Aorta (tissue), 5 donors: ENCODE measurements at regions of chr11 and their contacts with region 1.

Region 1: DNA sequence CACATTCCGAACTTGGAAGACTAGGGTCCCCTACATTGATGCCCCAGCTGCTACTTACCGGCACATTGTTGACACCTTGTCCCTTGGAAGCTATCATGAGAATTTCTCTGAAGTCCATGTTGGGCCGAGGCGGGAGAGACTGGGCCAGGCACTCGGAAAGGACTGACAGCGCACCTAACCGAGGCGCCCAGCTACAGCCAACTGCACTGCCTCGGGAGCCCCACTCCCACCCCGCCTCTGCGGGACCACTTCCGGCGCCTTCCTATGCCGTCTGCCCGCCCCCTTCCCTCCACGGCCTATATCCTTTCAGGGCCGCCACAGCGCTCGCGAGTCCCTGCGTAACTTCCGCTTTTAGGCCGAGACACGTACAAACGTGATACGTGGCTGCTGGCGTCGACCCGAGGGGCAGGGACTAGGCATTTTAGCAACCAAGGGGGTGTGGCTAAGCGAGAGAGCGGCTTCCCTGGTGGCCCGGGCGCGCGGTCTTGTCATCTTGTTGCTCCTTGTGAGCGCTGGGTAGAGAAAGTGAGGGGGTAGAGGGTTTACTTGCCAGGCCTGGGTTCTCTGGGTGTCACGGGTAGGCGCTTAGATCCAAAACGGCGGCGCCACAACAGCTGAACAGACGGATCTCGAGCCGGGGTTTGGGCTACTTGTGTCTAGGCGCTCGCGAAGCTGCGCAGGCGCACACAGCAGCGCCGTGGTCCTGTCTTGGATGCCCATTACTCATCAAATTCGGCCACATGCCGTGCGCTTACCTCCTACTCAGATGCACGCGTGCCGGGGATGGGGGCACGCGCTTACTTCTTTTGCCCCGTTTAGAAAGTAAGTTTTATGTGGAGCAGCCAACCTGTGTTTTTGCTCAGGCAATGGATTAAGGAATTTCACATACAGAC is at the start of gene SPTY2D1:
- DNase-seq: peak; percentile 100
- ATAC-seq: peak; percentile 100
- H3K4me3 ChIP-seq: peak within 1 kb of the TSS; percentile 75 to 84
- H3K27ac ChIP-seq: peak within 1 kb of the TSS; percentile 3 to 72
- H3K4me1 ChIP-seq: peaks cover 0 to 3% of the 10 kb centered on the region in 2 donors
- H3K27me3 ChIP-seq: no peaks in the 10 kb centered on the region
- total RNA-seq, gene SPTY2D1: 16.9 to 19.9 TPM

Region 2: DNA sequence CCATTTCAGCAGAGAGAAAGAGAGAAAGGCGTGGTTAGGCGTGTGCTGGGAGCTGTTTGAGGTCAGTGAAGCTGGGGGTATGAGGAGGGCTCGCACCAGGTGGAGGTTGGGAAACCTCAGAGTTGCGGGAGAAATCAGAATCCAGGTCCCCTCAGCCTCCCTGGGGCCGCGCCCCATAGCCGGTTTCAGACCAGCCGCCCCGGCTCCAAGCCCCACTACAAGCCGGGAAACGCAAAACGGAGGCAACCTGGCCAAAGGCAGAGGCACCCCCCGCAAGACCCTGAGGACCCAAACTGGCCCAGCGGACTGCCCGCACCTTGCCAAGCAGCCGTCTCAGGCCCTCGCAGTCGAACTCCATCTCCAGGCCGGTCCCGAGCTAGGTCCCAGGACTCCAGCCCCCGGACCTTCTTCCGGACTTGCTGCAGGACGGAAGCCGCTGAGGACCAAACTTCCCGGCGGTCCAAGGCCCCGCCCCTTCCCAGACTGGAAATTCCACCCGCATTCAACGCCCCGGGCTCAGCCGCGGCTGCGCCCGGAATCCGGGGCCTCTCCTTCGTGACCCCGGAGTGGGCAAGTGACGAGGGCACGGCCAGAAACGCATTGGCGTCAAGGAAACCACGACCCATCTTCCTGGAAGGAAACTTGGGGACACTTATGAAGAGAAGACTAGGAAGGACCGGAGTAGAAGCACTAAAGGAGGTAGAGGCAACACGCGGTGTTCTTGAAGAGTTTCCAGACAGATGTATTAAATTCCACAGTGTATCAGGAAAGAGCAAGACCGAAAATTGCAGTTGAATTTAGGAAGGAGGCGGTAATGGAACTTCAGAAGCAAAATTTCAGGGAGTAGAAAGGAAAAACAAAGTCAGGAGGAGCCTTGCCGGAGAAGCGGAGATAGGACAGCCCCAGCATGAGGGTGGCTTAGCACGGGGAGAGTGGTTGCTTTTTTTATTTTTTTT is 45.8 kb before region 1 on chr11 and contains the start of gene UEVLD:
- intact Hi-C with region 1: loop called in 1 of 2 experiments (anchors 5 kb)
- DNase-seq: peak; percentile 92 to 96
- ATAC-seq: peak; percentile 98
- H3K4me3 ChIP-seq: peak within 1 kb of the TSS; percentile 70 to 96
- H3K27ac ChIP-seq: peak within 1 kb of the TSS in 1 of 2 donors; percentile 72
- H3K4me1 ChIP-seq: peaks cover 6 to 11% of the 10 kb centered on the region in 2 donors
- H3K27me3 ChIP-seq: no peaks in the 10 kb centered on the region
- total RNA-seq, gene UEVLD: 22.4 to 25.2 TPM

Region 3: DNA sequence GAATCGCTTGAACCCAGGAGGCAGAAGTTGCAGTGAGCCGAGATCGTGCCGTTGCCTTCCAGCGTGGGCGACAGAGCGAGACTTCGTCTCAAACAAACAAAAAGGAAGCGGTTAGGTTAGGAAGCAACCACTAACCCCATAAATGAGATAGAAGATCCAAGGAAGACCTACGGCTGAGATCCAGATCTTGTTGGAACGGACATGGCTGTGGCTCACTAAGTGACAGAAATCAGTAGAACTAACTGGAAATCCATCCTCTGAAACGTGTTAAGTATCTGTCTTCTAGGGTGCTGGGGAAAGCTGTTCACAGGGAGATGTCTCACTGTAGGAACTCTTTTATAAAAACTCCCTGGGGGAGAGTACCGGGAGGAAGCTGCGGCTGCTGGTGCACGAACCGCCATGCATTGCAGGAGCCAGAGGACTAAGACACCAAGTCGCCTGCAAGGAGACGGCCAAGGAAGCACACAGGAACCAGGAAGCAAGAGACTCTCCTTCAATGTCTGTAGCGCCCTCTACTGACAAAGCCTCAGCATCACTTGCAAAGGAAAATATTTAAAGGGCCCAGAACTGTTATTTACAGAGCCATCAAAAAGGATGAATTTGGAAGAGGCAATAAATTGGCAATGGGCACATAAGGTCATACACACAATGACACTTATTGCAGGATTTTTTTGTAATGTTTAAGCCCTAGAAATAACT is 16.6 kb after region 1 on chr11:
- intact Hi-C with region 1: no loop called
- DNase-seq: peak in 1 of 2 donors; percentile 56
- ATAC-seq: no peak
- H3K4me3 ChIP-seq: no peak overlapping the region
- H3K27ac ChIP-seq: no peak overlapping the region
- H3K4me1 ChIP-seq: no peaks in the 10 kb centered on the region
- H3K27me3 ChIP-seq: no peaks in the 10 kb centered on the region

Region 4: DNA sequence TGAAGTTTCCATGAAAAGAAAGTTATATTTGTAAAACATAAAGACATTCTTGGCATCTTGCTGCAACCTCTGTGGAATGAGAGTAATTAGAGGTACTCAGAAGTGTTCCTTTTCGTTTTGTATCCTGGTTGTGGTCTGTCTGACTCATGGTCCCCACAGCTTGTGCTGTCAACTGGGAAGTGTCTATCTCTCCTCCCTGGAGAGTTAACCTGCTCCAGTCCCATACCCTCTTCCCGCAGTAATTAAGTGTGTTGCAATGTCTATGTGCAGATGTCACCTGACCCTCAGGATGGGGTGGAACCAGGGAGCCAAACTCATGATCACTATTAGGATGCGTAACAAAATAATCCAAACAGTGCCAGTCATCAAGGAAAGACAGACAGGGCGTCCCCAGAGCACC is 459.6 kb after region 1 on chr11:
- intact Hi-C with region 1: no loop called
- DNase-seq: no peak
- ATAC-seq: no peak
- H3K4me3 ChIP-seq: no peak overlapping the region
- H3K27ac ChIP-seq: no peak overlapping the region
- H3K4me1 ChIP-seq: no peaks in the 10 kb centered on the region
- H3K27me3 ChIP-seq: peaks cover 0 to 7% of the 10 kb centered on the region in 2 donors